ENCODE measurements at regions of chr4 and their contacts with region 1.

Region 1: GRCh38 chr4:76499461-76499860 is 64.4 kb downstream of the SHROOM3 start:
- DNase-seq: no peak
- ATAC-seq: no peak

Region 2: GRCh38 chr4:76463568-76463967 is 35.9 kb before region 1 on chr4:
- intact Hi-C with region 1: loop called in 1 of 2 experiments (anchors 5 kb)
- DNase-seq: no peak
- ATAC-seq: no peak

Measured in left cardiac atrium (tissue), 4 donors.